ENCODE measurements at regions of chr5 and their contacts with region 1.

Region 1: GRCh38 chr5:177546258-177546741 is 8.1 kb downstream of the FAM193B start:
- DNase-seq: peak; percentile 99
- ATAC-seq: peak; percentile 86
- H3K4me3 ChIP-seq: no peak overlapping the region
- H3K27ac ChIP-seq: peak overlapping the region; percentile 97
- H3K4me1 ChIP-seq: peaks cover 21% of the 10 kb centered on the region
- H3K27me3 ChIP-seq: no peaks in the 10 kb centered on the region
- CTCF ChIP-seq: peak; percentile 35
- POLR2A ChIP-seq: 0 out of 2 replicates have a peak, but pooled peaks have one; percentile 20
- RAD21 ChIP-seq: no peak; the same call in 1 of the 2 replicates

Region 2: GRCh38 chr5:177113566-177114424 is 432.5 kb before region 1 on chr5:
- CTCF ChIA-PET with region 1: no interaction called
- POLR2A ChIA-PET with region 1: no interaction called
- dilution Hi-C with region 1: no loop called
- in situ Hi-C with region 1: no loop called
- intact Hi-C with region 1: no loop called
- DNase-seq: peak; percentile 63
- ATAC-seq: peak; percentile 85
- H3K4me3 ChIP-seq: no peak overlapping the region
- H3K27ac ChIP-seq: no peak overlapping the region
- H3K4me1 ChIP-seq: no peaks in the 10 kb centered on the region; the same call in 1 of the 2 replicates
- H3K27me3 ChIP-seq: no peaks in the 10 kb centered on the region; the same call in 1 of the 2 replicates
- CTCF ChIP-seq: peak; percentile 98
- POLR2A ChIP-seq: peak; percentile 49; the same call in 1 of the 2 replicates
- RAD21 ChIP-seq: peak; percentile 100

Region 3: GRCh38 chr5:177351385-177352329 is 194.6 kb before region 1 on chr5 and contains the start of gene LMAN2:
- CTCF ChIA-PET with region 1: no interaction called
- POLR2A ChIA-PET with region 1: no interaction called
- dilution Hi-C with region 1: no loop called
- in situ Hi-C with region 1: no loop called
- intact Hi-C with region 1: no loop called
- DNase-seq: peak; percentile 96
- ATAC-seq: peak; percentile 99
- H3K4me3 ChIP-seq: peak within 1 kb of the TSS; percentile 63
- H3K27ac ChIP-seq: peak within 1 kb of the TSS; percentile 86
- H3K4me1 ChIP-seq: peaks cover 23% of the 10 kb centered on the region
- H3K27me3 ChIP-seq: peaks cover 2% of the 10 kb centered on the region; the same call in 1 of the 2 replicates
- CTCF ChIP-seq: no peak
- POLR2A ChIP-seq: peak; percentile 86
- RAD21 ChIP-seq: no peak
- total RNA-seq, gene LMAN2: 164 and 303 TPM in 2 replicates

Region 4: GRCh38 chr5:177516604-177517568 is 29.4 kb before region 1 on chr5 and contains the start of gene DDX41:
- CTCF ChIA-PET with region 1: no interaction called
- POLR2A ChIA-PET with region 1: no interaction called
- dilution Hi-C with region 1: no loop called
- in situ Hi-C with region 1: no loop called
- intact Hi-C with region 1: loop called (anchors 1 kb)
- DNase-seq: peak; percentile 99
- ATAC-seq: peak; percentile 89
- H3K4me3 ChIP-seq: peak within 1 kb of the TSS; percentile 70
- H3K27ac ChIP-seq: peak within 1 kb of the TSS; percentile 84
- H3K4me1 ChIP-seq: peaks cover 7% of the 10 kb centered on the region
- H3K27me3 ChIP-seq: no peaks in the 10 kb centered on the region
- CTCF ChIP-seq: no peak
- POLR2A ChIP-seq: peak; percentile 51; the same call in 1 of the 2 replicates
- RAD21 ChIP-seq: no peak
- total RNA-seq, gene DDX41: 130 and 141 TPM in 2 replicates